GM10248 (cell line): ENCODE measurements at regions of chr16 and their contacts with region 1.

Region 1: DNA sequence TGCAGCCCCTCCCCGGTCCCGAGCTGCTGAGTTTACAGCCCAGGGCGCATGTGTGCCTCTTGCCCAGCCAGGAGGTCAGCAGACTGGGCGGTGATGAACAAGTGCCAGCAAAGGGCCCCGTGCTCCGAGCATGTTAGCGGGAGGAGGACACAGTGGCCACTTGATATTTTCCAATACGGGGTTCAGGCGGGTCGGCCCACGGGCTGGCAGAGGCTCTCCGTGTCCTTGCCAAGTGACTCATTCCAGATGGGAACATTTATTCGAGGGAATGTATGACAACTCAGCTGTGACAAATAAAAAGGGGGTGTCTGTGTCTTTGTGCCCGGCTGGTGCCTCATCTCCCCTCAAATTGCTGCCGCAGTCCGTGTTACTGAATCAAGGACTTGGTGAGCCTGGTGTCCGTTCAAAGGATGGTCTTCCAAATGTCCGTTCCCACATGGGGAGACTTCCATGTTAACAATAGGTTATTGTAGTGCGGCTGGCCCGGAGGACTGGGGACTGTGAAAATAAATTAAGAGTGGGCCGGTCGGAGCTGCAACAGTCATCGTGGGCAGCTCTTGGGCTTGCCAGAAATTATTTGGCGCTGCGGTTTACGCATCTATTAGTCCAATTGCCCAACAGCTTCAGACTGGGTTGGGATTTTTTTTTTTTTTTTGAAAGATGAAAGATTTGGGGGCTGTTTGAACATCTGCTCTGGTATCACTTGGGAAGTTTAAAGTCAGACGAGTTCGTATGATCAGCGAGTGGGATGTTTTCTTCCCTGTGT is 174.0 kb upstream of the CIBAR2 start:
- DNase-seq: no peak
- CTCF ChIP-seq: no peak

Region 2: GRCh38 chr16:85275533-85276249 is 10.6 kb before region 1 on chr16:
- CTCF ChIA-PET with region 1: interaction called, 11 read pairs
- POLR2A ChIA-PET with region 1: no interaction called
- DNase-seq: peak; percentile 91
- CTCF ChIP-seq: peak; percentile 88

Region 3: GRCh38 chr16:85296859-85297660 is 10.8 kb after region 1 on chr16:
- CTCF ChIA-PET with region 1: interaction called, 10 read pairs
- POLR2A ChIA-PET with region 1: no interaction called
- DNase-seq: peak; percentile 75
- CTCF ChIP-seq: peak; percentile 66